ENCODE measurements at regions of chr7 and their contacts with region 1.

Region 1: GRCh38 chr7:44565097-44565794 is 8.5 kb downstream of the DDX56 start:
- DNase-seq: no peak
- ATAC-seq: peak; percentile 80
- H3K4me3 ChIP-seq: no peak overlapping the region
- H3K27ac ChIP-seq: no peak overlapping the region
- H3K4me1 ChIP-seq: peaks cover 11 to 26% of the 10 kb centered on the region in 2 experiments
- H3K27me3 ChIP-seq: no peaks in the 10 kb centered on the region
- CTCF ChIP-seq: peak; percentile 63 to 99 (median 88)
- POLR2A ChIP-seq: no peak
- RAD21 ChIP-seq: peak; percentile 78

Region 2: DNA sequence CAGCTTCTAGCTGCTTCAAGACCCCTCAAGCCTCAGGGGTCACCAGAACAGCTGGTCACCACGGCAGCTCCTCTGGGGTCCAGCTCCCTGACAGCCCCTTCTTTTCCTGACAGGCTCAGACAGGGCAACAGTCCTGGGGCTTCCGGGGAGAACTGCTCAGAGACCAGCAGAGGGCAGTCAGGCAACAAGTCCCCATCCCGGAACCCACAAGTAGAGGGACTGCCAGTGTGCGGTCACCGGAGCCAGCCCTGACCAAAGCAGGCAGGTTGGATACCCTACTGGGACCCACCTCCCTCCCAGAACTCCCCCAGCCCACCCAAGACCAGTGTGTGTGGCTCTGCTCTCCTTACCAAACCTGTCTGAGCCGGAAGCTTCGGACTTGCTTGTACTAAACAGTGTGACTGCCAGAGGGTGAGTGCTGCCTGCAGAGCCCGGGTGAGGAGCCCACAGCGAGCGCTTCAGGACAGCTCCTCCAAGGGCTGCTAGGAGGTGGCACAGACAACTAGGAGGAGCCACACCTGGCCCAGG is 324.2 kb before region 1 on chr7:
- CTCF ChIA-PET with region 1: interaction called, 21 read pairs
- POLR2A ChIA-PET with region 1: no interaction called
- RAD21 ChIA-PET with region 1: interaction called, 3 to 4 read pairs
- intact Hi-C with region 1: loop called (anchors 1 kb)
- DNase-seq: peak; percentile 66
- ATAC-seq: peak; percentile 98
- H3K4me3 ChIP-seq: no peak overlapping the region
- H3K27ac ChIP-seq: no peak overlapping the region
- H3K4me1 ChIP-seq: peaks cover 0 to 5% of the 10 kb centered on the region in 2 experiments; a peak in 1 of 4 replicates
- H3K27me3 ChIP-seq: no peaks in the 10 kb centered on the region
- CTCF ChIP-seq: peak; percentile 87 to 91 (median 89)
- POLR2A ChIP-seq: no peak
- RAD21 ChIP-seq: peak; percentile 93

Region 3: GRCh38 chr7:44348300-44348699 is 216.9 kb before region 1 on chr7:
- CTCF ChIA-PET with region 1: no interaction called
- POLR2A ChIA-PET with region 1: no interaction called
- RAD21 ChIA-PET with region 1: no interaction called
- intact Hi-C with region 1: loop called (anchors 5 kb)
- DNase-seq: peak; percentile 24
- ATAC-seq: peak; percentile 93
- H3K4me3 ChIP-seq: no peak overlapping the region
- H3K27ac ChIP-seq: no peak overlapping the region
- H3K4me1 ChIP-seq: no peaks in the 10 kb centered on the region
- H3K27me3 ChIP-seq: 0 out of 2 replicates have a peak, but pooled peaks cover 7% of the 10 kb centered on the region
- CTCF ChIP-seq: peak; percentile 50 to 57 (median 51); a peak in 4 of 6 replicates
- POLR2A ChIP-seq: no peak
- RAD21 ChIP-seq: peak; percentile 69

Region 4: DNA sequence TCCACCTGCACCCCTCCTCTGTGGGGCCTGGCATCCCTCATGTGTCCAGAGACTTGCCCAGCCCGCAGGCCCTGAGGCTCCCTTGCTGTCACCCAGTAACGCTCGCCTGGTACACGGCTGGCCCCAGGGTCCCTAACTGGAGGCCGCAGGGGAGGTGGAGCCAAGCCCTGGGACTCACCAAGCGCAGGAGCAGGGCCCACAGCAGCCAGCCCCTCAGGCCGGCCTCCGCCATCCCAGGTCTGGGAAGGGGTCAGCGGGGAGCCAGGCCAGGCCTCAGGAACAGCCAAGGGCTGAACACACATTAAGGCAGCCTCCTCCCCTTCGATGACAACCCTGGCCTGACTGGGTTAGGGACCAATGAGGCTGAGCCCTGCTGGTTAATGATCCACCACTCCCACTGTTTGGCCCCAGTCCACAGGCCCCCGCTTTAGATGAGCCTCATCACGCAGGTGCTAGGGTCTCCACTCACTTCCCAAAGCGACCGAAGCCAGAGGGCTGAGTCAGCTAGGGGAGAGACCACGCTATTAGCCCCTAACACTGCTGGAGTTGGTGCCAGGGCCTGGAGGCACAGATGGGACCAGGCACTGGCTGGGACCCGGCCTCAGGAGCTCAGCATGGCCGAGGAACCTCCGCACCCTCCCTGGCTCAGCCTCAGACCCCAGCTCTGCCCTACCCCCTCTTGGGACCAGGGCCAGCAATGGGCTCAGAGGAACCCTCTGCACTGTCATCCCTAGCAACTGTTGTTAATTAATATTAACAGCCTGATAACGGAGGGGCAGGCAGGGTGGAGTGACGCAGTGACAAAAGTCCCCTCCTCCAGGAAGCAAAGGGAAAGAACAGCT is 24.0 kb before region 1 on chr7 and contains the start of gene NPC1L1:
- CTCF ChIA-PET with region 1: interaction called, 10 read pairs
- POLR2A ChIA-PET with region 1: no interaction called
- RAD21 ChIA-PET with region 1: no interaction called
- intact Hi-C with region 1: no loop called
- DNase-seq: no peak
- ATAC-seq: no peak
- H3K4me3 ChIP-seq: no peak within 1 kb of the TSS
- H3K27ac ChIP-seq: no peak within 1 kb of the TSS
- H3K4me1 ChIP-seq: peaks cover 11% of the 10 kb centered on the region in 2 experiments
- H3K27me3 ChIP-seq: no peaks in the 10 kb centered on the region
- CTCF ChIP-seq: no peak
- POLR2A ChIP-seq: no peak
- RAD21 ChIP-seq: no peak
- total RNA-seq, gene NPC1L1: 0.15 TPM

Measured in HCT116 (cell line).